Colonic mucosa (tissue), 4 donors: ENCODE measurements at regions of chr11 and their contacts with region 1.

Region 1: DNA sequence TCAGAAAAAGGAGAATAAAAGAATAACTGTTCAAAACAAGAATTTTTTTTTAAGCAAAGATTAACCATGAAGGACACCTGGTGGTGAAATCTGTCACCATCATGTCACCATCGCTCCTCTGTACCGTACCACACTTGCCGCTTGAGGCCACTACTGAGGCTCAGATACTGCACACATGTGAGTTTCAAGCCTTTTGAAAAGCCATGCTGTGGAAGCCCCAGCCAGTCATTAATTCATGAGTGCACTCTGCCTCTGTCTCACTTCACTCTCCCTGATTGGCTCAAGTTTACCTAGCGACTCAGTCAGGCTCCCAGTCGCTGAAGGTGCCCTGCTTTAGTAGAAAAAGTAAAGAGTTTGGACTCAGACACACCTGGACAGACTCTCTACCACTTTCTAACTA is 6.6 kb upstream of the MS4A12 start:
- DNase-seq: peak; percentile 47
- H3K4me3 ChIP-seq: no peak overlapping the region
- H3K27ac ChIP-seq: no peak overlapping the region
- H3K4me1 ChIP-seq: no peaks in the 10 kb centered on the region
- H3K27me3 ChIP-seq: no peaks in the 10 kb centered on the region
- CTCF ChIP-seq: peak; percentile 39

Region 2: GRCh38 chr11:60301178-60301577 is 184.8 kb before region 1 on chr11:
- intact Hi-C with region 1: no loop called
- DNase-seq: no peak
- H3K4me3 ChIP-seq: no peak overlapping the region
- H3K27ac ChIP-seq: no peak overlapping the region
- H3K4me1 ChIP-seq: no peaks in the 10 kb centered on the region
- H3K27me3 ChIP-seq: no peaks in the 10 kb centered on the region
- CTCF ChIP-seq: no peak

Region 3: DNA sequence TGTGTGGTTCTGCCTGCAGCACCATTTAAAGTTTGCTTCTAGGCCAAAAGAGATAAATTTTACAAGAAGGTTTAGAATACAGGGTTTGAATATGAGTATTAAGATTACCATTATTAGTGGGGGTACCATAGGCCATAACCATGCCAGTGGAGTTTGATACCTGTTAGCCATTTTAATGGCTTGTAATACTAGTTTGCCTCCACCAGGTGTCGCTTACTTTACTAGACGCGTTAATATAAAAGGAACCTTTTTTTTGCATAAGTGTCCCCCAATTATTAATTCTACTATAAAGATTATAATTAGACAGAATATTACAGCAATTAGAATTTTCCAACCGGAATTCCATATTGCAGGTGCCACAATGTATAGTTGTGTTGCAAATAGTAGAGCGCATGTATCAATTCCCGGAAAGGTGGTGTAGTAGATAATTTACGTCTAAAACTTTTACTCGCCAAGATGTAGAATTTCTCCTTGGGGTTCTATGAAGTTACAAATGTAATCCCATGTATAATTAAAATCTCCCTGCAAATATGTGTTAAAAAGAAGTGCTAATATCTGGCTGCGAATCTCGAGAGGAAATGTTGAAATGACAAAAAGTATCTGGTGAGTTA is 142.8 kb before region 1 on chr11:
- intact Hi-C with region 1: no loop called
- DNase-seq: no peak
- H3K4me3 ChIP-seq: no peak overlapping the region
- H3K27ac ChIP-seq: no peak overlapping the region
- H3K4me1 ChIP-seq: no peaks in the 10 kb centered on the region
- H3K27me3 ChIP-seq: no peaks in the 10 kb centered on the region
- CTCF ChIP-seq: peak; percentile 53

Region 4: GRCh38 chr11:60363542-60364510 is 122.2 kb before region 1 on chr11:
- intact Hi-C with region 1: loop called (anchors 5 kb)
- DNase-seq: peak; percentile 74
- H3K4me3 ChIP-seq: no peak overlapping the region
- H3K27ac ChIP-seq: peak overlapping the region; percentile 16
- H3K4me1 ChIP-seq: no peaks in the 10 kb centered on the region
- H3K27me3 ChIP-seq: no peaks in the 10 kb centered on the region
- CTCF ChIP-seq: peak; percentile 79

Region 5: GRCh38 chr11:60433386-60433785 is 52.6 kb before region 1 on chr11:
- intact Hi-C with region 1: no loop called
- DNase-seq: no peak
- H3K4me3 ChIP-seq: no peak overlapping the region
- H3K27ac ChIP-seq: no peak overlapping the region
- H3K4me1 ChIP-seq: no peaks in the 10 kb centered on the region
- H3K27me3 ChIP-seq: no peaks in the 10 kb centered on the region
- CTCF ChIP-seq: no peak

Region 6: GRCh38 chr11:60544076-60544475 is 58.1 kb after region 1 on chr11:
- intact Hi-C with region 1: no loop called
- DNase-seq: no peak
- H3K4me3 ChIP-seq: no peak overlapping the region
- H3K27ac ChIP-seq: no peak overlapping the region
- H3K4me1 ChIP-seq: no peaks in the 10 kb centered on the region
- H3K27me3 ChIP-seq: no peaks in the 10 kb centered on the region
- CTCF ChIP-seq: no peak